Pancreas (tissue), 10 donors: ENCODE measurements at regions of chr13 and their contacts with region 1.

Region 1: DNA sequence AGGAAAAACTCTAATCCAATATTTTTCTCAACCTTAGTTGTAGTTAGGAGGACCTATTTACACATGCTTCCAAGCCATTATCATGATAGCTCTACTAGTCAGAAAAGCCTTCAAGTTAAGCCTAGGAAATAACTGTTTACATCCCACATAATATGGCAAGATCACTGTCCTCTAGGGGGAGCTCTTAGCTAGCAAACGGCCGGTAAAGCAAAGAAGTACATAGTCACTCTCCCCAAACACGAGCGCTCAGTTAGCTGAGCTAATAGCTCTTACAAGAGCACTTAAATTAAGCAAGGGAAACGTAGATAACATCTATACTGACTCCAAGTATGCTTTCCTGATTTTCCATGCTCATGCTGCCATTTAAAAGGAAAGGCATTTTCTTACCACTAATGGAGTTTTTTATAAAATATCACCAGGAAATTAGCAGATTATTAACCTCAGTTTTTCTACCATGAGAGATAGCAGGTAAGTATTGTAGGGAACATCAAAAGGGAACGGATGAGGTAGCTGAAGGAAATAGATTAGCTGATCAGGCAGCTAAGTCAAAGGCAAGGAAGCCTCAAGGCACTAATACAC is 100.6 kb upstream of the PABPC3 start:
- DNase-seq: peak in 3 of 6 donors; percentile 46 to 58 (median 53)
- ATAC-seq: peak; percentile 84 to 97 (median 93)
- H3K4me3 ChIP-seq: no peak overlapping the region
- H3K27ac ChIP-seq: no peak overlapping the region
- H3K4me1 ChIP-seq: no peaks in the 10 kb centered on the region
- H3K27me3 ChIP-seq: peaks cover 0 to 6% (median 0%) of the 10 kb centered on the region in 4 donors
- CTCF ChIP-seq: peak; percentile 60 to 68 (median 64)

Region 2: GRCh38 chr13:25037057-25037813 is 41.9 kb after region 1 on chr13:
- intact Hi-C with region 1: loop called in 1 of 3 experiments (anchors 5 kb)
- DNase-seq: peak in 3 of 6 donors; percentile 34 to 42 (median 35)
- ATAC-seq: peak in 3 of 4 donors; percentile 86 to 93 (median 87)
- H3K4me3 ChIP-seq: no peak overlapping the region
- H3K27ac ChIP-seq: no peak overlapping the region
- H3K4me1 ChIP-seq: no peaks in the 10 kb centered on the region
- H3K27me3 ChIP-seq: peaks cover 0 to 13% (median 0%) of the 10 kb centered on the region in 4 donors
- CTCF ChIP-seq: peak; percentile 59 to 76 (median 68)